Stomach (tissue), 19 donors: ENCODE measurements at regions of chr3 and their contacts with region 1.

Region 1: GRCh38 chr3:150183678-150184425 is 213.2 kb upstream of the PFN2 start:
- DNase-seq: peak; percentile 61 to 91
- H3K4me3 ChIP-seq: peak overlapping the region; percentile 29 to 42 (median 36)
- H3K27ac ChIP-seq: peak overlapping the region in 1 of 5 donors; percentile 5
- H3K4me1 ChIP-seq: peaks cover 6 to 28% (median 13%) of the 10 kb centered on the region in 4 donors
- H3K27me3 ChIP-seq: peaks cover 0 to 3% (median 0%) of the 10 kb centered on the region in 3 donors
- CTCF ChIP-seq: peak in 4 of 7 experiments; percentile 31 to 53 (median 42)
- EP300 ChIP-seq: no peak
- POLR2A ChIP-seq: no peak

Region 2: GRCh38 chr3:149969940-149970715 is 213.7 kb before region 1 on chr3:
- intact Hi-C with region 1: loop called (anchors 10 kb)
- DNase-seq: peak; percentile 88 to 97
- H3K4me3 ChIP-seq: peak overlapping the region; percentile 83 to 96 (median 92)
- H3K27ac ChIP-seq: peak overlapping the region; percentile 87 to 97 (median 88)
- H3K4me1 ChIP-seq: peaks cover 4 to 35% (median 31%) of the 10 kb centered on the region in 4 donors
- H3K27me3 ChIP-seq: peaks cover 0 to 30% (median 0%) of the 10 kb centered on the region in 3 donors
- CTCF ChIP-seq: no peak
- EP300 ChIP-seq: no peak
- POLR2A ChIP-seq: no peak